ENCODE measurements at regions of chr9 and their contacts with region 1.

Region 1: DNA sequence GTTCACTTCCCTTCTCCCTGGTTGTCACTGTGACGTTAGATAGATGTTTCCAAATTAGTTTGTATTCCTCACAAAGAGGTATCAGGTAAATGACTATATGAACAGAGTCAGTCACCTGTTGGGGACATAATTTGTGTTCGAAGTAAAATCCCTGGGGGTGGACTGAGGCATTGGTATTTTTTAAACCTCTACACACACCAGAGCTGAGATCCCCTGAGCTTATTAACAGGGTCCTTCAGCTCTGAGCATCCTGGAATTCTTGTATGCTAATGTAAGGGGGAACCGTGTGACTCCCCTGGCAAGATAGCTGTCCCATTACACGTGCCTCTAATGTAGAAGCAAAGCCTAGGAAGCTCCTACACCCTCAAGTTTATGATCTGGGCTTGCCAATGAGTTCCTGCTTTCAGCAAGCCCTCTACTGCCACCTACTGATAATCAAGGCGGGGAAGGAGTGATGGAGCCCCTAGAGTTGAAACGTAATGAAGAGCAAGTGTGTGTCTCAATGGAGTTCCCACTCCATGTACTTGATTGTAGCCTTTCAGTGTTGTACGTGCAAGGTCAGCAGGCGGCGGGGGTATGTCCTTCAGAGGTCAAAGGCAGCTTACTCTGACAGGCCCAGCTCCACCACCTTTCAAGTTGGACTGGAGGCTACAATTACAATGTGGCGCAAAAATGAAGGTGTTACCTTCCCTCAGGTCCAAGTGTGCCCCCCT is 14.4 kb downstream of the PRKACG start:
- DNase-seq: peak; percentile 79
- ATAC-seq: peak; percentile 95
- H3K4me3 Mint-ChIP-seq: no peak overlapping the region
- H3K27ac Mint-ChIP-seq: no peak overlapping the region
- H3K4me1 Mint-ChIP-seq: peaks cover 16% of the 10 kb centered on the region
- H3K27me3 Mint-ChIP-seq: peaks cover 9% of the 10 kb centered on the region

Region 2: DNA sequence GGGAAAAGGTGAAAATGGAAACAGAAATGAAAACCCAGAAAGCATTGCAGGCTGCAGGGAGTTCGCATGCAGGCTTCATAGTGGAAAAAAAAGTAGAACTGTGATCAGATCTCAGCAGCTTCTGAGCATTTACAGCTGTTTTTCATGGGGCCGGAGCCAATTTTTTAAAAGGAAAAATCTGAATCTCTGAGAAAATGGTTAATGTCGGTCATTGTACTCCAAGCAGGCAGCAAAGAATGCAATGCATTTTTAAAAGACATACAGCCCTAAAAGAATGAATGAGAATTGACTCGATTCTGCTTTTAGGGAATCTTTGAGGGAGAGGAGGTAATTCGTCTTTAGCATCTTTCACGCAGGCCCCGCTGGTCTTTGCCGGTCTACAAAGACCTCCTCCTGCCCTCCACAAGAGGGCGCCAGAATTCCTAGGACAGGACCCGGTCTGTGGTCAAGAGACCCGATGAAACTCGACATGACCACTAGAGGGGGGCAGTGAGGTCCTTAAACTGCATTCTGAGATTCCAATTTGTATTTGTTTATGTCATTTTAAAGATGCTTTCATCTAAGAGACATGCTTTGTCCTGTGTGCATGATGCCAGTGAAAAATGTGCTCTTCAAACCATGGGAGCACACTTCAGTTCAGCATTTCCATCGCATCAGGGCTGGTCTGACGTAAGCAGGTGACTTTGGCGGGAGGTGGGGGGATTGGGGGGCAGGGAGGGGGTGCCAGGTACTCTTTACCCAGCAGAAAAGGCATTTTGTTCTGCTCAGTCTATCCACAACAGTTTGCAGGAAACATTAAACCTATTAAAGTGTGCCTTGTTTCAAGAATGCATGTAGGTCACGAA is 415.1 kb before region 1 on chr9:
- CTCF ChIA-PET with region 1: interaction called, 12 read pairs
- POLR2A ChIA-PET with region 1: no interaction called
- DNase-seq: peak; percentile 81
- ATAC-seq: peak; percentile 84
- H3K4me3 Mint-ChIP-seq: no peak overlapping the region
- H3K27ac Mint-ChIP-seq: no peak overlapping the region
- H3K4me1 Mint-ChIP-seq: no peaks in the 10 kb centered on the region
- H3K27me3 Mint-ChIP-seq: peaks cover 5% of the 10 kb centered on the region

Region 3: GRCh38 chr9:68964102-68964541 is 35.4 kb before region 1 on chr9:
- CTCF ChIA-PET with region 1: interaction called, 13 read pairs
- POLR2A ChIA-PET with region 1: no interaction called
- DNase-seq: no peak
- ATAC-seq: no peak
- H3K4me3 Mint-ChIP-seq: no peak overlapping the region
- H3K27ac Mint-ChIP-seq: no peak overlapping the region
- H3K4me1 Mint-ChIP-seq: no peaks in the 10 kb centered on the region
- H3K27me3 Mint-ChIP-seq: peaks cover 16% of the 10 kb centered on the region

Region 4: GRCh38 chr9:68974431-68974830 is 25.1 kb before region 1 on chr9:
- CTCF ChIA-PET with region 1: interaction called, 10 read pairs
- POLR2A ChIA-PET with region 1: no interaction called
- DNase-seq: no peak
- ATAC-seq: peak; percentile 58
- H3K4me3 Mint-ChIP-seq: no peak overlapping the region
- H3K27ac Mint-ChIP-seq: no peak overlapping the region
- H3K4me1 Mint-ChIP-seq: peaks cover 20% of the 10 kb centered on the region
- H3K27me3 Mint-ChIP-seq: no peaks in the 10 kb centered on the region

Region 5: DNA sequence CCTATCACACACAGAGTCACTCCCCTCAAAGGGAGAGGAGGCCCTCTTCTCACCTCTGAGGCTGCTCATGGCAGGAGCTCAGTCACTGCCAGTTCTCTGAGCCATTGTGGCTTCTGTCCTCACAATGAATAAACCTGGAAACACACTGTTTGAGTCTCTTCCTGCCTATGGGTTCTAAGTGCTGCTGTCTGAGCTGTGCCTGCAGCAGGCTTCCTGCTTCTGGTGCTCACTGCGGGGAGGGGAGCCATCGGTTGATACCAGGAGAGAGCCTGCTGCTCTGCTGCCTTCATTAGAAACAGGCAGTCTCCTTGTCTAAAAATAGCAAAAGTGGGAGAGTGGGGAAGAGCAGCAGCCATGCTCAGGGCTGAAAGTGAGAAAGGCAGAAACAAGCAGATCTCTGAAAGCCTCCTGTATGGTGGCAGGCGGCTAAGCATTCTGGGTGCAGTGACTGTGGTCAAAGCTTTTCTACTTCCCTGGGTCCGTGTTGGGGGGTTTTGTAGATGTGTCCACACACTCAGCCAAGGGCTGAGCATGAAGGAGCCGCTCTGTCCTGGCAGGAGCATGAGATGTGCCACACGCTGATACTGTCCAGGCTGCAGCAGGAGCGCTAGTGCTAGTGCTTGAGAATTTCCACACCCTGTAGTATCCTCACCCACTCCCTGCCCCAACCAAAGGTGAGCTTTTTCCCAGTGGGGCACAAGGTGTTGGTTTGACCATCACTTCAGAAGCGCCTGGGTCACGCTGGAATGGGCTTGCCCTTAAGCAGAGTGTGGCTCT is 19.8 kb before region 1 on chr9:
- CTCF ChIA-PET with region 1: interaction called, 10 read pairs
- POLR2A ChIA-PET with region 1: no interaction called
- DNase-seq: peak; percentile 41
- ATAC-seq: peak; percentile 85
- H3K4me3 Mint-ChIP-seq: no peak overlapping the region
- H3K27ac Mint-ChIP-seq: peak overlapping the region; percentile 54
- H3K4me1 Mint-ChIP-seq: peaks cover 31% of the 10 kb centered on the region
- H3K27me3 Mint-ChIP-seq: no peaks in the 10 kb centered on the region